ENCODE measurements at regions of chr6 and their contacts with region 1.

Region 1: GRCh38 chr6:149028767-149029405 is 282.1 kb downstream of the UST start:
- DNase-seq: peak; percentile 67
- H3K4me3 Mint-ChIP-seq: peak overlapping the region; percentile 77
- H3K27ac Mint-ChIP-seq: peak overlapping the region; percentile 87
- H3K4me1 Mint-ChIP-seq: peaks cover 57% of the 10 kb centered on the region
- H3K27me3 Mint-ChIP-seq: no peaks in the 10 kb centered on the region

Region 2: DNA sequence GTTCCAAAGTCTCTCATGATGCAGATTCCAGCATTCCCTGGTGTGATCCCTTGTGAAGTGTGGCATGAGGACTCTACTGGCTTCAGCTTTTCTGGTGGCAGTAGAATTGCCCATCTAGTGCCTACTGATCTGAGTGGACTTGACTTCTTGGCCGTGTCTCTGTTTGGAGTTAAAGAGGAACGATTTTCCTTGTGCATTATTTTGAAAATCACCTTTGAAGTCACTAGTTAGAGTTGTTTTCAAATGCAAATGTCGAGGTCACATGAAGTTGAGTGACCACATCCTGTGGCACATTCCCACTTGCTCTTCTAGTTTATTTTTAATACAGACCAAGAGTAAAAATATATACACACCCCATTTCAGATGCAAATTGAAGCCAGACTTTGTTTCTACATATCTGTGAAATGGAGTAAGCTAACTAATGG is 17.9 kb after region 1 on chr6:
- intact Hi-C with region 1: loop called (anchors 1 kb)
- DNase-seq: no peak
- H3K4me3 Mint-ChIP-seq: peak overlapping the region; percentile 72
- H3K27ac Mint-ChIP-seq: peak overlapping the region; percentile 74
- H3K4me1 Mint-ChIP-seq: peaks cover 44% of the 10 kb centered on the region
- H3K27me3 Mint-ChIP-seq: no peaks in the 10 kb centered on the region

Region 3: GRCh38 chr6:149082286-149082707 is 53.4 kb after region 1 on chr6:
- intact Hi-C with region 1: loop called (anchors 1 kb)
- DNase-seq: peak; percentile 81
- H3K4me3 Mint-ChIP-seq: peak overlapping the region; percentile 80
- H3K27ac Mint-ChIP-seq: peak overlapping the region; percentile 92
- H3K4me1 Mint-ChIP-seq: peaks cover 89% of the 10 kb centered on the region
- H3K27me3 Mint-ChIP-seq: no peaks in the 10 kb centered on the region

Region 4: GRCh38 chr6:149211046-149211571 is 182.2 kb after region 1 on chr6:
- intact Hi-C with region 1: loop called (anchors 1 kb)
- DNase-seq: no peak
- H3K4me3 Mint-ChIP-seq: no peak overlapping the region
- H3K27ac Mint-ChIP-seq: no peak overlapping the region
- H3K4me1 Mint-ChIP-seq: peaks cover 4% of the 10 kb centered on the region
- H3K27me3 Mint-ChIP-seq: no peaks in the 10 kb centered on the region

Region 5: GRCh38 chr6:149389509-149390297 is 360.8 kb after region 1 on chr6:
- intact Hi-C with region 1: loop called (anchors 1 kb)
- DNase-seq: no peak
- H3K4me3 Mint-ChIP-seq: no peak overlapping the region
- H3K27ac Mint-ChIP-seq: peak overlapping the region; percentile 45
- H3K4me1 Mint-ChIP-seq: peaks cover 82% of the 10 kb centered on the region
- H3K27me3 Mint-ChIP-seq: no peaks in the 10 kb centered on the region

Region 6: GRCh38 chr6:149508485-149508884 is 479.6 kb after region 1 on chr6:
- intact Hi-C with region 1: loop called (anchors 1 kb)
- DNase-seq: peak; percentile 39
- H3K4me3 Mint-ChIP-seq: peak overlapping the region; percentile 13
- H3K27ac Mint-ChIP-seq: peak overlapping the region; percentile 81
- H3K4me1 Mint-ChIP-seq: peaks cover 53% of the 10 kb centered on the region
- H3K27me3 Mint-ChIP-seq: no peaks in the 10 kb centered on the region